ENCODE measurements at regions of chr3 and their contacts with region 1.

Region 1: DNA sequence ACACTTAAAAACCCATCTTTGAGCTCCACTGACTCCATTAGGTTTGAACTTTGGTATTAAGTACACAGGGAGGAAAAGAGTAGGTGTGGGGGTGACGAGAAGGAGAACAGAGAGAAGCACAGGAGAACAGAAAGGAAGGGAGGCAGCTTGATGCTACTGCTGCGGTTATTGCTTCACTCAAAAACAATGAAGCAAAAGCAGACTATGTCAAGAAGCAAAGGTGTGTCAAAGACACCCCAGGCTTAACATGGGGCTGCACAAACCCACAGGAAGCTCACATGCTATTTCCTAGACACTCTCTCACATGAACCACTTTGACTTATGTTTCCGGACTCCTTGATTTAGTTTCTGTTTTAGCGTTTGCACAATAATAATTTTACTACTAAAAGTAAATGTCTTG is 961.0 kb upstream of the CFAP20DC start:
- DNase-seq: peak; percentile 76
- H3K4me3 Mint-ChIP-seq: peak overlapping the region; percentile 68
- H3K27ac Mint-ChIP-seq: peak overlapping the region; percentile 98
- H3K4me1 Mint-ChIP-seq: peaks cover 46% of the 10 kb centered on the region
- H3K27me3 Mint-ChIP-seq: no peaks in the 10 kb centered on the region

Region 2: GRCh38 chr3:59992578-59992977 is 18.2 kb before region 1 on chr3:
- CTCF ChIA-PET with region 1: interaction called, 3 read pairs
- POLR2A ChIA-PET with region 1: interaction called, 10 read pairs
- DNase-seq: no peak
- H3K4me3 Mint-ChIP-seq: no peak overlapping the region
- H3K27ac Mint-ChIP-seq: no peak overlapping the region
- H3K4me1 Mint-ChIP-seq: peaks cover 10% of the 10 kb centered on the region
- H3K27me3 Mint-ChIP-seq: no peaks in the 10 kb centered on the region

Region 3: DNA sequence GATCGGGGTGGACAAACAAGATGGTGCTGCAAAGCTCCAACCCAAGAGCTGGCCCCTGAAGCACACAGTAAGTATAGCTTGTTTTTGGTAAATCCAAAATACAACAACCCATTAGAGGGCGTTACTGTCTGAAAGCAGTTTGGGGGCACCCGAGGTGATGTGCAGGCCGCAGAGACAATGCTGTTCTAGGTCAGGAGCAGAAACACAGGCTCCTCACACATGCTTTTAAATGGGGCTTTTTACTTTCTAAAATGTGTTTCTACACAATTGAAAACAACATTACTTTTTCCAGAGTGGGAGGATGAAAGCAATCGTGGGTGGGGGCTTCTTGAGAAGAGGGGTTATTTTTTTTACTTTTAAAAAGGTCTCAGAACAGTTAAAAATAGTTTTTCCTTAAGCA is 68.3 kb after region 1 on chr3:
- CTCF ChIA-PET with region 1: no interaction called
- POLR2A ChIA-PET with region 1: interaction called, 12 read pairs
- DNase-seq: peak; percentile 36
- H3K4me3 Mint-ChIP-seq: peak overlapping the region; percentile 61
- H3K27ac Mint-ChIP-seq: peak overlapping the region; percentile 78
- H3K4me1 Mint-ChIP-seq: peaks cover 40% of the 10 kb centered on the region
- H3K27me3 Mint-ChIP-seq: no peaks in the 10 kb centered on the region

Region 4: DNA sequence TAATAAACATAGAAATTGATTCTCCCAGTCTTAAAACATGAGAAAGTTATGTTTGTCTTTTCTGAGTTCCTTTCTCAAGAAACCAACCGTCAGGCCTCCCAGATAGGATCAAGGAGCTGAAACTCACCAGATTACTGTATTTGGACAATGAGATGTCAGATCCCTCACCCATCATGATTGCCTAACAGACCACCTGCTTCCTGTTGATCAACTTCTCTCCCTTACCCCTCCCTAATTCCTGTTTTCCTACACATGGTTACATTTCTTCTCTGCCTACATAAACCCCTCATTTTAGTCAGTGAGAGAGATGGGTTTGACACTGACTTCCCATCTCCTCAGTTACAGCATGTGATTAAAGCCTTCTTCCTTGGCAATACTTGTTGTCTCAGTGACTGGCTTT is 322.9 kb after region 1 on chr3:
- CTCF ChIA-PET with region 1: no interaction called
- POLR2A ChIA-PET with region 1: no interaction called
- DNase-seq: no peak
- H3K4me3 Mint-ChIP-seq: no peak overlapping the region
- H3K27ac Mint-ChIP-seq: no peak overlapping the region
- H3K4me1 Mint-ChIP-seq: peaks cover 4% of the 10 kb centered on the region
- H3K27me3 Mint-ChIP-seq: no peaks in the 10 kb centered on the region